ENCODE measurements at regions of chr10 and their contacts with region 1.

Region 1: DNA sequence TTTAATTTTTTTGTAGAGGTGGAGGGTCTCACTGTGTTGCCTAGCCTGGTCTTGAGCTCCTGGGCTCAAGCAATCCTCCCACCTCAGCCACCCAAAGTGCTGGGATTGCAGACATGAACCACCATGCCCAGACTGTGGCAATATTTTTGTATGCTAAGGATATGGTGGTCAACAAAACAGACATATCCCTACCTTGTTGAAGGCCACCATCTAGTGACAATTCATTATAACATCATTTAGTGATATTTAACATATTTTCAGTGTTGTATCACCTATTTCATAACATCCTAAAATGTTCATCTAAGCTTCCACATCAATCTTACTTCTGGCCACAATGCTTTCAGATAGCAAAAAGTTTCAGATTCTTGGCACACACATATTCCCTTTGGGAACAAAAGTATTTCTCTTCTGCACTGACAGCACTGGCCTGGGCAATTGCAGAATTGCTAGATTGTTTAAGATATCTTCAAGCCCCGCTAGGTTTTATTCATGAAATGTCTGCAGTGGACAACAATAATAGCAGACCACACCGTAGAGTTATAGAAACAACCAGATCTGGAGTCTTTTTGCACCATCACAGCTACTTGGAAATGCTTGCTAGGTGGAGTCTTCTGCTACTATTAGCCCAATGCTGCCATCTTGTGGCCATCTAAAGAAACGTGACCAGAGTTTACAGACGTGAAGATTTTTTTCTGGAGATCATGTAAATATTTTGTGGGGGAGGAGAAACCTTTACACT is 58.4 kb downstream of the DNAJC12 start:
- DNase-seq: peak in 1 of 2 donors; percentile 45
- H3K4me3 ChIP-seq: no peak overlapping the region
- H3K27ac ChIP-seq: no peak overlapping the region
- H3K4me1 ChIP-seq: no peaks in the 10 kb centered on the region
- H3K27me3 ChIP-seq: no peaks in the 10 kb centered on the region
- CTCF ChIP-seq: peak; percentile 70 to 83 (median 70)
- POLR2A ChIP-seq: no peak

Region 2: DNA sequence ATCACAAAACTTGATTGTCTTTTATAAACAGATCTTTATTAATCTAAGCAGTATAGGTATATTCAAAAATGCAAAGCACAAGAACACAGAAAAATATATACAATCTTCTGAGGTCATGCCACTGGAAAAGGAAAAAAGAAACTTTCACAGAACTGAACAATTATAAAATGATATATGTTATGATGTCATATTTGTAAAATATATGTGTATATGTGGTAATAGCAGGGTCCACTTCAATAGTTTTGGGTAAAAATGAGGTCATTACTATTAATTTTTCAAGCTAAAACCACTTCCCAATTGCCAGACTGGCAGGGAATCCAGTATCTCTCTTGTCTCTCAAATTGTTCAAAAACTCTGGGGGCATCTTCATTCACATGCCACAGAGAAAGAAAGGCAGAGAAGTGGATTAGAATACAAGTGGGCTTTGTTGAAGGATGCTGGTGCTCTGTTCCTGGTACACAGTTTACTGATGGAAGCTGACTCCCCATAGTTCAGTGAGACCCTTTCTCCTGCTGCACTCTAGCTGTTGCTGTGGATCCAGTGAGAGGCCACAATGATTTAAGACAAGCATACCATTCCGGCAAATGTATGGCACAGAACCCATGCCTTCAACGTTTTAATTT is 103.3 kb before region 1 on chr10:
- intact Hi-C with region 1: loop called (anchors 10 kb)
- DNase-seq: no peak
- H3K4me3 ChIP-seq: no peak overlapping the region
- H3K27ac ChIP-seq: no peak overlapping the region
- H3K4me1 ChIP-seq: no peaks in the 10 kb centered on the region
- H3K27me3 ChIP-seq: no peaks in the 10 kb centered on the region
- CTCF ChIP-seq: no peak
- POLR2A ChIP-seq: no peak

Measured in breast epithelium (tissue), 4 donors.